ENCODE measurements at regions of chr10 and their contacts with region 1.

Region 1: GRCh38 chr10:133453516-133454203 is at the start of gene SCART1:
- DNase-seq: no peak
- ATAC-seq: peak; percentile 55
- H3K4me3 ChIP-seq: no peak within 1 kb of the TSS
- H3K4me3 Mint-ChIP-seq: no peak within 1 kb of the TSS
- H3K27ac ChIP-seq: no peak within 1 kb of the TSS
- H3K27ac Mint-ChIP-seq: no peak within 1 kb of the TSS
- H3K4me1 ChIP-seq: no peaks in the 10 kb centered on the region
- H3K4me1 Mint-ChIP-seq: peaks cover 0 to 4% (median 0%) of the 10 kb centered on the region in 7 donors
- H3K27me3 ChIP-seq: no peaks in the 10 kb centered on the region
- H3K27me3 Mint-ChIP-seq: no peaks in the 10 kb centered on the region
- total RNA-seq, gene SCART1: 2.3 to 8.6 (median 4.5) TPM

Region 2: GRCh38 chr10:132563843-132564521 is 889.7 kb before region 1 on chr10:
- CTCF ChIA-PET with region 1: no interaction called
- POLR2A ChIA-PET with region 1: no interaction called
- intact Hi-C with region 1: loop called in 1 of 2 experiments (anchors 10 kb)
- DNase-seq: no peak
- ATAC-seq: no peak
- H3K4me3 ChIP-seq: no peak overlapping the region
- H3K4me3 Mint-ChIP-seq: peak overlapping the region in 2 of 10 donors; percentile 18 to 32
- H3K27ac ChIP-seq: no peak overlapping the region
- H3K27ac Mint-ChIP-seq: peak overlapping the region in 1 of 9 donors; percentile 72
- H3K4me1 ChIP-seq: peaks cover 0 to 5% of the 10 kb centered on the region in 2 donors
- H3K4me1 Mint-ChIP-seq: peaks cover 16 to 64% (median 47%) of the 10 kb centered on the region in 7 donors
- H3K27me3 ChIP-seq: no peaks in the 10 kb centered on the region
- H3K27me3 Mint-ChIP-seq: no peaks in the 10 kb centered on the region

Measured in naive thymus-derived CD4-positive, alpha-beta T cell (primary cell).